ENCODE measurements at regions of chr15 and their contacts with region 1.

Region 1: DNA sequence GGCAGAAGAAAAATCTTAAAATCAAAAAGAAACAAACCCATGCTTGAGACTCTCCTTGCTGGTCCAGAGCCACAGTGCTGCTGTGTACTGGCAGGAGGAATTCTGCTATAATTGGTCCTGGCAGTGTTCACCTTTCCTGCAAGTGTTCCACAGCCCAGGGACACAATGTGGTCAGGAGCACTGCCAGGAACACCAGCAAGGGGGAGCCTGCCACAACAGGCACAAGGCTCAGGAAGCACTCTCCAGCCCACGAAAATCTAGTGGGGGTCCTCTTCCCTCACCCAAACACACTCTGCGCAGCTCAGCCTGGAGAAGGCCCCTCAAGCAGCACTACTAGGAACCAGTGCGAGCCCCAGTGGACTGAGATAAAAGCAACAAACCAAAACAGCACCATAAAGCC is 92.9 kb downstream of the UBE3A start:
- DNase-seq: peak in 1 of 2 experiments; percentile 32
- H3K4me3 ChIP-seq: no peak overlapping the region
- H3K4me3 Mint-ChIP-seq: no peak overlapping the region
- H3K27ac Mint-ChIP-seq: peak overlapping the region; percentile 36
- H3K4me1 ChIP-seq: 0 out of 2 replicates have a peak, but pooled peaks cover 9% of the 10 kb centered on the region
- H3K4me1 Mint-ChIP-seq: peaks cover 7% of the 10 kb centered on the region
- H3K27me3 ChIP-seq: no peaks in the 10 kb centered on the region
- H3K27me3 Mint-ChIP-seq: no peaks in the 10 kb centered on the region
- CTCF ChIP-seq: peak in 1 of 2 experiments; percentile 28

Region 2: DNA sequence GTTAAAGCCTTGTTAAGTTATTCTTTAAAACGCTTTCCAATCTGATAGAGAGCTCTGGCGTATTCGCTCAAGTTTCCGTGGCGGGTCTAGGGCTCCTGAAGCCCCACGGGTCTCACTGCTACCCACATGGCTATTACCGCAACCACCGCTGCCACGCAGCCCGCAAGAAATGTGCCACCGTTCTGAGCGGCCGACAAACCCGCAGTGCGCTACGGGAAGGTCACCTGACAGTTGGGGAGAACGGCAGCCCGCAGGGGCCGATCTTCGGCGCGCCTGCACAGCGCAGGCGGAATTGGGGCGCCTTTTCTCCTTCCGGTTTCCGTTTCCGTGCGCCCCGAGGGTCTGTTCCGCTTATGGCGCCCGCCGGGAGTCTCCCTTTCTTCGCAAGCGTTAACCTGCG is 467.8 kb before region 1 on chr15:
- CTCF ChIA-PET with region 1: no interaction called
- POLR2A ChIA-PET with region 1: no interaction called
- intact Hi-C with region 1: no loop called
- DNase-seq: no peak
- H3K4me3 ChIP-seq: no peak overlapping the region
- H3K4me3 Mint-ChIP-seq: no peak overlapping the region
- H3K27ac Mint-ChIP-seq: no peak overlapping the region
- H3K4me1 ChIP-seq: no peaks in the 10 kb centered on the region
- H3K4me1 Mint-ChIP-seq: no peaks in the 10 kb centered on the region
- H3K27me3 ChIP-seq: no peaks in the 10 kb centered on the region
- H3K27me3 Mint-ChIP-seq: no peaks in the 10 kb centered on the region
- CTCF ChIP-seq: no peak

Region 3: DNA sequence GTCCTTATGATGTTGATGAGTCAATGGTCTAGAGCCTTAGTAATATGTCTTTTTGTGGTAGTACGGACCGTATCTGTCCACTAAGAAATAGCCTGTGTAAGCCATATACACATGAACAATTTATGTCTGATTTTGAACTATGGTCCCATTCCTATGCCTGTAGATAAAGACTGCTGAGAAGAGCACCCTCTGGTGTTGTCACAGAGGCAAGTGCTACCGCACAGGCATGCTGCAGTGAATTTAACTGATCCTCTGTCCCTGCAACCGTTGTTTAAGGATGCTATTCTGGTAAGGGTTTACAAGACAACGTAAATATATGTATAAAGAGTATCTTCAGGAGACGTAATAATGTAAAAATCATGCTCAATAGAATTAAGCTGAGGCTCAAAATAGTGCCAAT is 77.8 kb before region 1 on chr15:
- CTCF ChIA-PET with region 1: no interaction called
- POLR2A ChIA-PET with region 1: no interaction called
- intact Hi-C with region 1: no loop called
- DNase-seq: no peak
- H3K4me3 ChIP-seq: no peak overlapping the region
- H3K4me3 Mint-ChIP-seq: no peak overlapping the region
- H3K27ac Mint-ChIP-seq: no peak overlapping the region
- H3K4me1 ChIP-seq: no peaks in the 10 kb centered on the region; the same call in 1 of the 2 replicates
- H3K4me1 Mint-ChIP-seq: no peaks in the 10 kb centered on the region
- H3K27me3 ChIP-seq: no peaks in the 10 kb centered on the region
- H3K27me3 Mint-ChIP-seq: no peaks in the 10 kb centered on the region
- CTCF ChIP-seq: no peak

Region 4: DNA sequence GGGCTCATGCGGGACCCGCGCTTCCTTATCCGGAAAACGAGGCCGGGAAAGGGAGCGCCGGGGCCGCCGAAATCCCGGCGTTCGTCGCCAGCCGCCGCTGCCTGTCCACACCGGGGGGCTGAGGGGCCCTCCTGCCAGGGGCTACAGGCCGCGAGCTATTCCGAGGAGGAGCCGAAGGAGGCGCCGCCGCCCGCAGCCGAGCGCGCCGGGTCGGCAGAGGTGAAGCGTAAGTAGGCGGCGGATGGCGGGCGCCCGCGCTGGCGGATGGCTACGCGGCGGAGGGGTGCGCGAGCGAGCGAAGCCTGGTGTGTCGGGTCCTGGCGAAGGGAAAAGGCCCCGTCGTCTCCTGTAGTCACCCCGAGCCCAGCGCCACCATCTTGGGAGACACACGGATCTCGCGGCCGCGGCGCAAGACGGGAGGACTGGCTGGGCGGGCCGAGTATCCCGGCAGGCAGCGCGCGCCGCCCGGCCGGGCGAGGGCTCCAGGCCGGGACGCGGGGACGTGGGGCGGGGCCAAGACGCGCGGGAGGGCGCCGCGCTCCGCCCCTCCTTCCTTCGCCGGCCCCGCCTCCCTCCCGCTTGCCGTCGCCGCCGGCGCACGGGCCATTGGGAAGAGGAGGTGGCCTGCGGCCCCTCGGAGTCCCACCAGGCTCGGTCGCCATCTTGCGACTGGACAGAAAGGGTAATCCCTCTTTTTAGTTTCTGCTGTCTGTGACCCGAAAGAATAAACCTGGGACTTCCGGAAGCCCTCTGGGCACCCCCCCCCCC is 92.8 kb after region 1 on chr15 and contains the start of gene UBE3A:
- CTCF ChIA-PET with region 1: no interaction called
- POLR2A ChIA-PET with region 1: no interaction called
- intact Hi-C with region 1: loop called (anchors 5 kb)
- DNase-seq: peak; percentile 91 to 97
- H3K4me3 ChIP-seq: peak within 1 kb of the TSS; percentile 97
- H3K4me3 Mint-ChIP-seq: peak within 1 kb of the TSS; percentile 95
- H3K27ac Mint-ChIP-seq: peak within 1 kb of the TSS; percentile 93
- H3K4me1 ChIP-seq: peaks cover 14% of the 10 kb centered on the region
- H3K4me1 Mint-ChIP-seq: peaks cover 14% of the 10 kb centered on the region
- H3K27me3 ChIP-seq: no peaks in the 10 kb centered on the region
- H3K27me3 Mint-ChIP-seq: no peaks in the 10 kb centered on the region
- CTCF ChIP-seq: peak in 1 of 2 experiments; percentile 5
- total RNA-seq, gene UBE3A: 125 and 131 TPM in 2 replicates